ENCODE measurements at regions of chr6 and their contacts with region 1.

Region 1: GRCh38 chr6:118565311-118565960 is 17.3 kb downstream of the PLN start:
- DNase-seq: peak; percentile 26
- H3K4me3 Mint-ChIP-seq: no peak overlapping the region
- H3K27ac Mint-ChIP-seq: peak overlapping the region; percentile 12
- H3K4me1 Mint-ChIP-seq: peaks cover 28% of the 10 kb centered on the region
- H3K27me3 Mint-ChIP-seq: no peaks in the 10 kb centered on the region

Region 2: DNA sequence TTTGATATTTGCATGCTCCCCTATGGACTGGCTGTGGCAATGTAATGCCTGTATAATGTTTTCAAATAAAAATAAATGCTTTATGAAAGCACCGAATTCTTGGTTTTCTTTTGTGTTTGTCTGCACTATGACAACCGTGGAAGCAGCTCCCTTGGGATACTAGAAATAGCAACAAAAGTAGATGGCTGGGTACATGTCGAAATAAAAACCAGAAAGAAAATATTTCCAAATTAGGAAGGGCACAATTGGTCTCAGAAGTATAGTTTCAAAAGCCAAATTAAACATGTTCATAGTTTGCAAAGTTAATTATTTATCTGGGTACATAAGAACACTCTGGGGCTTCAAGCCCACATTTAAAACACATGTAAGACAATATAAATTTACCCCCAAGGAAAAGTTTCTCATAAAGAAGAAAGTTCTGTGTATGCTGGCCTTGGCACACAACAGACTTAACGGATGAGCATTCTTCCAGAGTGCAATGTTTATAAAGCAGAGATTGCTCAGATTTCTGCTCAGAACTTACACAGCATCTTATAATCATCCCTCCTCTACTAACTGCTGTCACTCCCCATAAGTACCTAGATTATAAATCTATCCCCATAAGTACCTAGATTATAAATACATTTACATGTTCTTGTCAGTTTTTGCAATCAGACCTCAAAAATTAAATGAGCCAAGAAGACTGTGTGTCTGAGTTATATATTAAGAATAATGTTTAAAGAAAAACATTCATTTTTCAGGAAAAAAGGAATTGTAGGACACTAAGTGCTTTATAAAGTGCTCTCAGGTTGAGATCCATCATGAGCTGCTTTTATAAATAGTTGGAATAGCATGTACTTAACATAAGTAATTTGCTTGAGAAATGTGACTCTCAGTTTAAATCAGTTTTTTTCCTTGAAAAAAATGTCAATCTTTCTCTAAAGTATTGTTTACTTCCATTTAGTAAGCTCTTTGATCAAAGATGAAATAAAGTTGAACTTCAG is 247.6 kb before region 1 on chr6:
- CTCF ChIA-PET with region 1: no interaction called
- intact Hi-C with region 1: no loop called
- DNase-seq: no peak
- H3K4me3 Mint-ChIP-seq: no peak overlapping the region
- H3K27ac Mint-ChIP-seq: no peak overlapping the region
- H3K4me1 Mint-ChIP-seq: no peaks in the 10 kb centered on the region
- H3K27me3 Mint-ChIP-seq: no peaks in the 10 kb centered on the region

Region 3: DNA sequence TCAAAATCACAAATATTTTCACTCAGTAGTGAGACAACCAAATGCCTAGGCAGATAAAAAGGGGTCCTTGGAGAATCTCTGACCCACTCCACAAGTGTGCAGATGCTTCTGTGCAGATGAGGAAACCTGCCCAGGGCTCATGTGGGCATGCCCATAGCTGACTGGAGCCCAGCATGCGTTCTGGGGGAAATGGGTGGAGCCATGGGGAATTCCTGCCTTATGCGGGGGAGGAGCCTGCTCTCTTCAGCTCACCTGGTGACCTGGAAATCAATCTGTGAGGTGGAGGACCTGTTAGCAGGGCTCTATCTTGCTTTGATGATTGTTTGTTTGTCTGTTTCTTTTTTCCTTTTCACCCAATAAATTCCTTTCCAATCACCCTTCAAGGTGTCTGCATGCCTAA is 40.8 kb before region 1 on chr6:
- CTCF ChIA-PET with region 1: no interaction called
- intact Hi-C with region 1: no loop called
- DNase-seq: peak; percentile 14
- H3K4me3 Mint-ChIP-seq: no peak overlapping the region
- H3K27ac Mint-ChIP-seq: peak overlapping the region; percentile 41
- H3K4me1 Mint-ChIP-seq: peaks cover 32% of the 10 kb centered on the region
- H3K27me3 Mint-ChIP-seq: no peaks in the 10 kb centered on the region

Region 4: DNA sequence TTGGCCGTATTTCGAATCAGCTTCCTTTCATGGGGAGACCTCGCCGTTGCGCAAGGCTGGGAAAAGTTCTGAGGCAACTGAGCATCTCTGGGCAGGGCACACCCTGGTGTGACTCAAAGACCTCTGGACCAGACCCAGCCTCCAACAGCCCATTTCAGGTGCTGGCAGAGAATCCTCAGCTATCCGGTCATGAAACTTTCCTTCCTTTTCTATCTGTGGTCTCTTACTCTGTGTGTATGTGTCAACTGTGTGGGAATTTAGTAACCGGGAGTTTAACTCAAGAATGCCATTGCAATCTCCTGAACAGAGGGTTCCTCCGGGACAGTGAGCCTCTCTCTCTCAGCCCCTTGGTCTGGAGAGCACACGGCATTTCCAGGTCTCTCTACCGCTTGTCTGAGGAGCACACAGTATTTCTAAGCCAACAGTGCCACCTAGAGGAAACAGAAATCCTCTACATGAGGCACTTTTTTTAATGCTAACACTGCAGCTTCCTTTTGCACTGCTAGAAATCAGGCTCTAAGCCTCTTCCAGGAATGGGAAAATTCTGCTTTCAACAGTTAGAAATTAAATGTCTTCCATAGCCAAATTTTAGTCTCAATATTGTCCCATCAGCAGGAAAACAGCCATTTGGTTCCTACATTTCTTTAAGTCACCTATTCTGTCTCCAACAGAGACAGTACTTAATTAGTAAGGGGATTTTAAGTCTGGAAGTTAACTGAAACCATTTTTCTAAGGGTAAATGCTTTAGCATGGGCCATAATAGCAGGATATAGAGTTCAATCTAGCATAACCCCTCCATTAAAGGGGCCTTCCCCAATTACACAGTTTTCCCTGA is 15.4 kb after region 1 on chr6:
- CTCF ChIA-PET with region 1: interaction called, 18 read pairs
- intact Hi-C with region 1: no loop called
- DNase-seq: peak; percentile 26
- H3K4me3 Mint-ChIP-seq: no peak overlapping the region
- H3K27ac Mint-ChIP-seq: peak overlapping the region; percentile 58
- H3K4me1 Mint-ChIP-seq: peaks cover 2% of the 10 kb centered on the region
- H3K27me3 Mint-ChIP-seq: no peaks in the 10 kb centered on the region

Region 5: GRCh38 chr6:118618679-118619377 is 53.4 kb after region 1 on chr6:
- CTCF ChIA-PET with region 1: interaction called, 7 read pairs
- intact Hi-C with region 1: loop called (anchors 1 kb)
- DNase-seq: peak; percentile 81
- H3K4me3 Mint-ChIP-seq: no peak overlapping the region
- H3K27ac Mint-ChIP-seq: no peak overlapping the region
- H3K4me1 Mint-ChIP-seq: peaks cover 50% of the 10 kb centered on the region
- H3K27me3 Mint-ChIP-seq: no peaks in the 10 kb centered on the region

Region 6: GRCh38 chr6:118697554-118697953 is 132.1 kb after region 1 on chr6:
- CTCF ChIA-PET with region 1: no interaction called
- intact Hi-C with region 1: no loop called
- DNase-seq: peak; percentile 41
- H3K4me3 Mint-ChIP-seq: no peak overlapping the region
- H3K27ac Mint-ChIP-seq: no peak overlapping the region
- H3K4me1 Mint-ChIP-seq: peaks cover 73% of the 10 kb centered on the region
- H3K27me3 Mint-ChIP-seq: no peaks in the 10 kb centered on the region

Region 7: GRCh38 chr6:118735320-118735719 is 169.9 kb after region 1 on chr6:
- CTCF ChIA-PET with region 1: no interaction called
- intact Hi-C with region 1: loop called (anchors 1 kb)
- DNase-seq: no peak
- H3K4me3 Mint-ChIP-seq: no peak overlapping the region
- H3K27ac Mint-ChIP-seq: no peak overlapping the region
- H3K4me1 Mint-ChIP-seq: peaks cover 33% of the 10 kb centered on the region
- H3K27me3 Mint-ChIP-seq: no peaks in the 10 kb centered on the region

Region 8: DNA sequence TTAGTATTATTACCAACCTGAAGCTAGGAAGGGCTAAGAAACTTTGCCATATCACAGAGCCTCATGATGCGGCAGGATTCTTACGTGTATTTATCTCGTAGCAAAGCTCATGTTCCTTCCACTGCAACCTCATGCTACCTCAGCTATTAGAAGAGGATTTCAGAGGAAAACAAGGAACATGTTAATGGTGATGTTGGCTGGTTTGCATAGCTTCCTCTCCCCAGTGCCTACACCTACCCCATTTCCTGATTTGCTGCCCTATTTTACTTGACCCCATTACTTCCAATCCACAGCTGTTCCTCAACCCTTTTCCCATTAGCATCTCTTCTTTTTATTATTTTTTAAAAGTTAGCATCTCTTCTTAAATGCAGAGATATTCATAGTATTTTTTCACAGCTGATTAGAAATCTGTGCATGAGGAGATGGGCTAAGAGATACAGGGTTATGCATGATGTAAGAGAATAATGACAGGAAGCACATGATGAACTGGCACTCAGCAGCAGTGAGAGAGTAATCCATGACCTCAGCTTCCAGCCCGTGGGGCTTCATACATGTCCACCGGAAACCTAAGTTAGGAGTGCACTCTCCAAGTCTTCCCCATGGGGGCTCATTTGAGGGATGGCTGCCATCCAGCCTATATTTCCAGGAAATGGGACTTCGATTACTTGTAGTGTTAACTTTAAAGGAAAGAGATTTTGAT is 222.4 kb after region 1 on chr6:
- CTCF ChIA-PET with region 1: interaction called, 10 read pairs
- intact Hi-C with region 1: no loop called
- DNase-seq: peak; percentile 27
- H3K4me3 Mint-ChIP-seq: no peak overlapping the region
- H3K27ac Mint-ChIP-seq: no peak overlapping the region
- H3K4me1 Mint-ChIP-seq: peaks cover 47% of the 10 kb centered on the region
- H3K27me3 Mint-ChIP-seq: no peaks in the 10 kb centered on the region

Measured in activated naive CD4-positive, alpha-beta T cell treated with anti-CD3 and anti-CD28 coated beads for 36 hours (primary cell).